ENCODE measurements at regions of chr15 and their contacts with region 1.

Region 1: GRCh38 chr15:61834076-61834697 is 226.1 kb downstream of the VPS13C start:
- DNase-seq: peak; percentile 94

Region 2: GRCh38 chr15:60511351-60512031 is 1322.7 kb before region 1 on chr15:
- intact Hi-C with region 1: loop called in 1 of 2 experiments (anchors 10 kb)
- DNase-seq: no peak

Region 3: GRCh38 chr15:60585743-60586708 is 1248.2 kb before region 1 on chr15:
- intact Hi-C with region 1: loop called (anchors 10 kb)
- DNase-seq: no peak

Region 4: GRCh38 chr15:60592371-60593169 is 1241.6 kb before region 1 on chr15:
- intact Hi-C with region 1: loop called (anchors 10 kb)
- DNase-seq: peak; percentile 94

Region 5: GRCh38 chr15:62150445-62150844 is 316.3 kb after region 1 on chr15:
- intact Hi-C with region 1: no loop called
- DNase-seq: no peak